ENCODE measurements at regions of chr20 and their contacts with region 1.

Region 1: GRCh38 chr20:17431621-17432364 is 99.4 kb downstream of the BFSP1 start:
- DNase-seq: peak; percentile 18
- H3K4me3 ChIP-seq: no peak overlapping the region
- H3K27ac ChIP-seq: no peak overlapping the region
- H3K27me3 ChIP-seq: no peaks in the 10 kb centered on the region
- CTCF ChIP-seq: peak; percentile 92

Region 2: GRCh38 chr20:16801919-16802911 is 629.6 kb before region 1 on chr20:
- in situ Hi-C with region 1: loop called (anchors 10 kb)
- DNase-seq: peak; percentile 71
- H3K4me3 ChIP-seq: no peak overlapping the region
- H3K27ac ChIP-seq: no peak overlapping the region
- H3K27me3 ChIP-seq: no peaks in the 10 kb centered on the region
- CTCF ChIP-seq: peak; percentile 90